Activated B cell treated with CpG ODN at 0.5 μM for 24 hours (primary cell): ENCODE measurements at regions of chr5 and their contacts with region 1.

Region 1: GRCh38 chr5:56270568-56271392 is 37.6 kb upstream of the ANKRD55 start:
- DNase-seq: peak; percentile 60
- ATAC-seq: peak; percentile 98
- H3K4me3 Mint-ChIP-seq: peak overlapping the region; percentile 49
- H3K27ac Mint-ChIP-seq: peak overlapping the region; percentile 37
- H3K4me1 Mint-ChIP-seq: peaks cover 23% of the 10 kb centered on the region
- H3K27me3 Mint-ChIP-seq: no peaks in the 10 kb centered on the region
- CTCF ChIP-seq: peak; percentile 73

Region 2: GRCh38 chr5:55982957-55983381 is 287.8 kb before region 1 on chr5:
- CTCF ChIA-PET with region 1: no interaction called
- POLR2A ChIA-PET with region 1: no interaction called
- intact Hi-C with region 1: loop called (anchors 1 kb)
- DNase-seq: no peak
- ATAC-seq: no peak
- H3K4me3 Mint-ChIP-seq: no peak overlapping the region
- H3K27ac Mint-ChIP-seq: no peak overlapping the region
- H3K4me1 Mint-ChIP-seq: no peaks in the 10 kb centered on the region
- H3K27me3 Mint-ChIP-seq: no peaks in the 10 kb centered on the region
- CTCF ChIP-seq: no peak

Region 3: GRCh38 chr5:56565644-56566043 is 294.9 kb after region 1 on chr5:
- CTCF ChIA-PET with region 1: interaction called, 9 read pairs
- POLR2A ChIA-PET with region 1: no interaction called
- intact Hi-C with region 1: loop called (anchors 10 kb)
- DNase-seq: peak; percentile 32
- ATAC-seq: peak; percentile 97
- H3K4me3 Mint-ChIP-seq: peak overlapping the region; percentile 49
- H3K27ac Mint-ChIP-seq: peak overlapping the region; percentile 33
- H3K4me1 Mint-ChIP-seq: peaks cover 48% of the 10 kb centered on the region
- H3K27me3 Mint-ChIP-seq: no peaks in the 10 kb centered on the region
- CTCF ChIP-seq: no peak

Region 4: DNA sequence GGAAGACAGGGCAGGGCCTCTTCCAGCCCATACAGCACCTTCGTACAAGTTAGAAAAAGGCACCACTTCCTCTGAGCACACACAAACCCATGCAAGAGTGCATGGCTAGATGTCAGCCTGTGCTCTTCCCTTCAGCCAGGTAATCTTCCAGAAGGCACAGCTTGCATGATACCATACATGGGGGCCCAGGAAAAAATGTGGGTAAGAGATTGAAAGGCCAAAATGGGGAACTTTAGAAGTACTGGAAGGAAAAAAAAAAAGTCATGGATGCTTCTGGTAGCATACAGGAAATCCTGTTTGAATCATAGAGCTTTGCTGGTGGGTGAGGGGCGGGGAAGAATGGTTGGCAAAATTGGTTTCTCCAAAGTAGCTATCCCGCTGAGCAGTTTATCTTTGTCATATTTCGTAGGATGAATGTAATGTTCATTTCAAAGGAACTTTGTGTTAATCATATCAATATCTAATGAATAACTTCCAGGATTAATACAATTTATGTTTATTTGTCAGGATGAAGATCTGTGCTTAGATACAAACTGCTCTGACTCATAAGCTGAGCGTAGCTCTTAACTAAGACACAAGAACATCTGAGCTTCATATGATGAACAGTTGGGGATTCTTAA is 466.3 kb after region 1 on chr5:
- CTCF ChIA-PET with region 1: interaction called, 8 read pairs
- POLR2A ChIA-PET with region 1: no interaction called
- intact Hi-C with region 1: loop called (anchors 5 kb)
- DNase-seq: no peak
- ATAC-seq: peak; percentile 29
- H3K4me3 Mint-ChIP-seq: peak overlapping the region; percentile 25
- H3K27ac Mint-ChIP-seq: peak overlapping the region; percentile 83
- H3K4me1 Mint-ChIP-seq: peaks cover 62% of the 10 kb centered on the region
- H3K27me3 Mint-ChIP-seq: no peaks in the 10 kb centered on the region
- CTCF ChIP-seq: no peak

Region 5: GRCh38 chr5:56838409-56839039 is 567.7 kb after region 1 on chr5:
- CTCF ChIA-PET with region 1: interaction called, 240 read pairs
- POLR2A ChIA-PET with region 1: interaction called, 17 read pairs
- intact Hi-C with region 1: loop called (anchors 1 kb)
- DNase-seq: no peak
- ATAC-seq: peak; percentile 59
- H3K4me3 Mint-ChIP-seq: peak overlapping the region; percentile 42
- H3K27ac Mint-ChIP-seq: peak overlapping the region; percentile 78
- H3K4me1 Mint-ChIP-seq: peaks cover 95% of the 10 kb centered on the region
- H3K27me3 Mint-ChIP-seq: no peaks in the 10 kb centered on the region
- CTCF ChIP-seq: no peak

Region 6: GRCh38 chr5:56986626-56986947 is 715.8 kb after region 1 on chr5:
- CTCF ChIA-PET with region 1: no interaction called
- POLR2A ChIA-PET with region 1: interaction called, 10 read pairs
- intact Hi-C with region 1: no loop called
- DNase-seq: no peak
- ATAC-seq: peak; percentile 89
- H3K4me3 Mint-ChIP-seq: peak overlapping the region; percentile 16
- H3K27ac Mint-ChIP-seq: peak overlapping the region; percentile 54
- H3K4me1 Mint-ChIP-seq: peaks cover 15% of the 10 kb centered on the region
- H3K27me3 Mint-ChIP-seq: no peaks in the 10 kb centered on the region
- CTCF ChIP-seq: no peak

Region 7: DNA sequence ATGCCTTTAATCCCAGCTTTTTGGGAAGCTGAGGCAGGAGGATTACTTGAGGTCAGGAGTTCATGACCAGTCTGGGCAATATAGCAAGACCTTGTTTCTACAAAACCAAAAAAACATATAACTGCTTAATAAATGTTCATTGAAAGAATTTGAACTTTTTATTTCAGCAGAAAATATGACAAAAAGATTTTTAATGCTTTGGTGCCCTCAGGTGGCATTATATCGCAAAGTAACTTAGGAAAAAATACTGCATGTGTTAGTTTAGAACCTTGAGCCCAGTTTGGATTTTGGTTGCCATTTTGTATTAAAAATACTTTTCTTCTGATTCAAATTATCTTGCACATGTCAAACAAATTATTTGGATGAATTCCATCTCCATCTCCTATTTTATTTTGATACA is 1006.3 kb after region 1 on chr5:
- CTCF ChIA-PET with region 1: no interaction called
- POLR2A ChIA-PET with region 1: no interaction called
- intact Hi-C with region 1: loop called (anchors 10 kb)
- DNase-seq: no peak
- ATAC-seq: no peak
- H3K4me3 Mint-ChIP-seq: no peak overlapping the region
- H3K27ac Mint-ChIP-seq: no peak overlapping the region
- H3K4me1 Mint-ChIP-seq: no peaks in the 10 kb centered on the region
- H3K27me3 Mint-ChIP-seq: no peaks in the 10 kb centered on the region
- CTCF ChIP-seq: no peak